CD4-positive, alpha-beta memory T cell (primary cell): ENCODE measurements at regions of chr6 and their contacts with region 1.

Region 1: GRCh38 chr6:130381459-130382380 is 15.9 kb downstream of the TMEM200A start:
- DNase-seq: peak; percentile 52 to 66 (median 57)
- H3K4me3 ChIP-seq: no peak overlapping the region
- H3K4me3 Mint-ChIP-seq: peak overlapping the region in 7 of 8 donors; percentile 11 to 64 (median 43)
- H3K27ac ChIP-seq: no peak overlapping the region
- H3K27ac Mint-ChIP-seq: peak overlapping the region in 6 of 7 donors; percentile 1 to 65 (median 28)
- H3K4me1 ChIP-seq: peaks cover 21% of the 10 kb centered on the region
- H3K4me1 Mint-ChIP-seq: peaks cover 21 to 34% (median 26%) of the 10 kb centered on the region in 4 donors
- H3K27me3 ChIP-seq: no peaks in the 10 kb centered on the region
- H3K27me3 Mint-ChIP-seq: no peaks in the 10 kb centered on the region

Region 2: GRCh38 chr6:130138116-130138908 is 243.4 kb before region 1 on chr6:
- CTCF ChIA-PET with region 1: no interaction called
- POLR2A ChIA-PET with region 1: no interaction called
- intact Hi-C with region 1: loop called (anchors 5 kb)
- DNase-seq: no peak
- H3K4me3 ChIP-seq: no peak overlapping the region
- H3K4me3 Mint-ChIP-seq: peak overlapping the region; percentile 74 to 91 (median 82)
- H3K27ac ChIP-seq: peak overlapping the region; percentile 1
- H3K27ac Mint-ChIP-seq: peak overlapping the region; percentile 80 to 93 (median 91)
- H3K4me1 ChIP-seq: peaks cover 68% of the 10 kb centered on the region
- H3K4me1 Mint-ChIP-seq: peaks cover 59 to 82% (median 69%) of the 10 kb centered on the region in 4 donors
- H3K27me3 ChIP-seq: no peaks in the 10 kb centered on the region
- H3K27me3 Mint-ChIP-seq: no peaks in the 10 kb centered on the region

Region 3: GRCh38 chr6:130365166-130366106 is 16.3 kb before region 1 on chr6 and contains the start of gene TMEM200A:
- CTCF ChIA-PET with region 1: interaction called, 84 read pairs
- POLR2A ChIA-PET with region 1: interaction called, 12 read pairs
- intact Hi-C with region 1: loop called (anchors 1 kb)
- DNase-seq: peak; percentile 34 to 52 (median 36)
- H3K4me3 ChIP-seq: peak within 1 kb of the TSS in 1 of 2 donors; percentile 66
- H3K4me3 Mint-ChIP-seq: peak within 1 kb of the TSS; percentile 83 to 96 (median 87)
- H3K27ac ChIP-seq: peak within 1 kb of the TSS; percentile 55
- H3K27ac Mint-ChIP-seq: peak within 1 kb of the TSS in 6 of 7 donors; percentile 13 to 92 (median 64)
- H3K4me1 ChIP-seq: peaks cover 34% of the 10 kb centered on the region
- H3K4me1 Mint-ChIP-seq: peaks cover 20 to 37% (median 31%) of the 10 kb centered on the region in 4 donors
- H3K27me3 ChIP-seq: no peaks in the 10 kb centered on the region
- H3K27me3 Mint-ChIP-seq: no peaks in the 10 kb centered on the region
- total RNA-seq, gene TMEM200A: 1.1 to 1.2 TPM

Region 4: GRCh38 chr6:130396722-130397121 is 15.0 kb after region 1 on chr6:
- CTCF ChIA-PET with region 1: interaction called, 35 read pairs
- POLR2A ChIA-PET with region 1: interaction called, 8 read pairs
- intact Hi-C with region 1: no loop called
- DNase-seq: peak in 3 of 5 donors; percentile 6 to 21 (median 7)
- H3K4me3 ChIP-seq: peak overlapping the region in 1 of 2 donors; percentile 42
- H3K4me3 Mint-ChIP-seq: peak overlapping the region; percentile 83 to 89 (median 86)
- H3K27ac ChIP-seq: no peak overlapping the region
- H3K27ac Mint-ChIP-seq: peak overlapping the region in 5 of 7 donors; percentile 59 to 91 (median 86)
- H3K4me1 ChIP-seq: peaks cover 8% of the 10 kb centered on the region
- H3K4me1 Mint-ChIP-seq: peaks cover 15 to 45% (median 26%) of the 10 kb centered on the region in 4 donors
- H3K27me3 ChIP-seq: no peaks in the 10 kb centered on the region
- H3K27me3 Mint-ChIP-seq: no peaks in the 10 kb centered on the region